ENCODE measurements at regions of chr22 and their contacts with region 1.

Region 1: GRCh38 chr22:46563381-46564083 is 26.1 kb upstream of the CELSR1 start:
- DNase-seq: peak in 1 of 2 donors; percentile 73
- ATAC-seq: peak; percentile 83 to 89
- H3K4me3 ChIP-seq: peak overlapping the region in 1 of 4 donors; percentile 21
- H3K27ac ChIP-seq: peak overlapping the region in 3 of 4 donors; percentile 22 to 52 (median 26)
- H3K4me1 ChIP-seq: peaks cover 5 to 6% of the 10 kb centered on the region in 2 donors
- H3K27me3 ChIP-seq: no peaks in the 10 kb centered on the region
- CTCF ChIP-seq: peak; percentile 81 to 88 (median 86)
- POLR2A ChIP-seq: no peak

Region 2: GRCh38 chr22:45787759-45788158 is 775.8 kb before region 1 on chr22:
- in situ Hi-C with region 1: no loop called
- intact Hi-C with region 1: no loop called
- DNase-seq: no peak
- ATAC-seq: no peak
- H3K4me3 ChIP-seq: no peak overlapping the region
- H3K27ac ChIP-seq: no peak overlapping the region
- H3K4me1 ChIP-seq: peaks cover 31 to 33% of the 10 kb centered on the region in 2 donors
- H3K27me3 ChIP-seq: no peaks in the 10 kb centered on the region
- CTCF ChIP-seq: no peak
- POLR2A ChIP-seq: no peak

Region 3: DNA sequence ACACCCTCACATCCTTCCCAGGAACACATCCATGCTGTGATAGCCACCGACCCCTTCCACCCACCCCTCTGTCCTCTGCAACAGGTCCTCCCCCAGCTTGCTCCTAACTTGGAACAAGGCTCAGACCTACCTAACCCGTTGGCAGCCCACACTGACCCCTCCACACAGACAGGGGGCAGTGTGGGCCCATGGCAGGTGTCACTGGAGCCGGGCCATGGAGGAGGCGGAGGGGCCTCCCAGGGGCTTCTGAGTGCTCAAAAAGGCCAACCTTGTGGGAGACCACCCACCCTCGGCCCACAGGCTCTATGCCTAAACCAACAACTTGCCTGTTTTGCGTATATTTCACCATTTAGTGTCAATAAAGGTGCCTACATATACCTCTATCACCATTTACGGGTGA is 117.5 kb after region 1 on chr22:
- in situ Hi-C with region 1: loop called in 1 of 4 experiments (anchors 25 kb)
- intact Hi-C with region 1: loop called (anchors 5 kb)
- DNase-seq: no peak
- ATAC-seq: no peak
- H3K4me3 ChIP-seq: no peak overlapping the region
- H3K27ac ChIP-seq: no peak overlapping the region
- H3K4me1 ChIP-seq: peaks cover 17 to 18% of the 10 kb centered on the region in 2 donors
- H3K27me3 ChIP-seq: no peaks in the 10 kb centered on the region
- CTCF ChIP-seq: peak in 1 of 5 experiments; percentile 14
- POLR2A ChIP-seq: no peak

Region 4: DNA sequence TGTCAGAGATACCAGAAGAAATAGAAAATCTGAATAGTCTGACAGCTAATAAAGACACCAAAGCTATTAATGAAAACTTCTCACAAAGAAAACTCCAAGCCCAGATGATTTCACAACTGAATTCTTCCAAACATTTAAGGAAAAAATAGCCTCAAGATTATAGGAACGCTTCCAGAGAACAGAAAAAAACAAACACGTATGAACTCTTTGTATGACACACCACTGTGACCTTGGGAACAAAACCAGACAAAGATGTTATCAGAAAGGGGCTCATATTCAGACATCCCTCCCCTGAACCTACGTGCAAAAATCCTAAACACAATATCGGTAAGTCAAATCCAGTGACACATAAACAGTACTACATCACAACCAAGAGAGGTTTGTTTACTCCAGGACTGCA is 151.0 kb after region 1 on chr22:
- in situ Hi-C with region 1: loop called in 1 of 4 experiments (anchors 25 kb)
- intact Hi-C with region 1: no loop called
- DNase-seq: no peak
- ATAC-seq: peak in 1 of 2 donors; percentile 45
- H3K4me3 ChIP-seq: no peak overlapping the region
- H3K27ac ChIP-seq: peak overlapping the region; percentile 17 to 61 (median 47)
- H3K4me1 ChIP-seq: peaks cover 5 to 9% of the 10 kb centered on the region in 2 donors
- H3K27me3 ChIP-seq: no peaks in the 10 kb centered on the region
- CTCF ChIP-seq: no peak
- POLR2A ChIP-seq: no peak

Region 5: GRCh38 chr22:46798366-46799350 is 235.1 kb after region 1 on chr22:
- in situ Hi-C with region 1: loop called in 2 of 4 experiments (anchors 10 to 25 kb)
- intact Hi-C with region 1: loop called (anchors 2 kb)
- DNase-seq: peak in 1 of 2 donors; percentile 61
- ATAC-seq: peak; percentile 71 to 82
- H3K4me3 ChIP-seq: no peak overlapping the region
- H3K27ac ChIP-seq: no peak overlapping the region
- H3K4me1 ChIP-seq: peaks cover 0 to 4% of the 10 kb centered on the region in 2 donors
- H3K27me3 ChIP-seq: no peaks in the 10 kb centered on the region
- CTCF ChIP-seq: peak; percentile 84 to 94 (median 90)
- POLR2A ChIP-seq: no peak

Measured in gastrocnemius medialis (tissue), 4 donors.